ENCODE measurements at regions of chr22 and their contacts with region 1.

Region 1: GRCh38 chr22:21569459-21570170 is 2.1 kb downstream of the UBE2L3 start:
- DNase-seq: no peak
- ATAC-seq: no peak
- H3K4me3 ChIP-seq: peak overlapping the region in 7 of 12 donors; percentile 75 to 99 (median 94)
- H3K27ac ChIP-seq: peak overlapping the region in 2 of 12 donors; percentile 59 to 94
- H3K4me1 ChIP-seq: peaks cover 4 to 65% (median 57%) of the 10 kb centered on the region in 12 donors
- H3K27me3 ChIP-seq: no peaks in the 10 kb centered on the region
- CTCF ChIP-seq: no peak
- POLR2A ChIP-seq: no peak

Region 2: DNA sequence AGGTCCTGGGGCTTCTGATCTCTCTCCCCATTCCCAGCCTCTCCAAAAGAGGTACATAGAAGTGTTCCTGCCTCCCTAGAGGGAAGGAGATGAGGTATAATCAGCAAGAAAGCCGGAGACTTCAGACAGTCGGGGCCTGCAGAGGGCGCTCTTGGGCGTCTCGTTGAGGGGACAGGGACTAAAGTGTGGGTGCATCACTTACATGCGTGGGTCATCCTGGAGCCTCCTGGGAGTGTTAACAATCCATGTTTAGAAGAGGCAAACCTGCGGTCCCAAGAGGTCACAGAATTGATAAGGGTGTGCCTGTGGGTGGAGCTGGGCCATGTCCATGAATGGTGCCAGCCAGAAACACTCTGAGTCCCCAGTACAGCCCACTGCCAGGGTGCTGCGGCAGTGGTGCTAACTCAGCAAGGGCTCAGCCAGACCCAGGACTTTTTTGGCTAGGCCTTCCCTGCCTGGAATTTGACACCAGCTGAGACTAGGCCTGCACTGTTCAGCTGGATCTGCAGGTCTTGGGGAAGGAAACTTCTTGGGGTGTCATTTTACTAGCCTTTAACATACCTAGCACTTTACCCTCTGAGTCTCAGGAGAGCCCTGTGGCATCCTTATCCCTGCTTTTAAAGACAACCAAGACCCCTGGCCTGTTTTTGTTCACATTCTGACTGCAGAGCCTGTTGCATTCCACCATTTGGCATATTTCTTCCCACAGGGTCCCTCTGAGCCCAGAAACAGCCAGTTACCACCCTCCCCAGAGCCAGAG is 54.7 kb after region 1 on chr22:
- intact Hi-C with region 1: loop called in 2 of 10 experiments (anchors 5 kb)
- DNase-seq: peak in 2 of 5 donors; percentile 50 to 68
- ATAC-seq: peak; percentile 56 to 79 (median 59)
- H3K4me3 ChIP-seq: no peak overlapping the region
- H3K27ac ChIP-seq: peak overlapping the region in 6 of 12 donors; percentile 1 to 37 (median 22)
- H3K4me1 ChIP-seq: peaks cover 0 to 76% (median 32%) of the 10 kb centered on the region in 12 donors
- H3K27me3 ChIP-seq: no peaks in the 10 kb centered on the region
- CTCF ChIP-seq: peak in 8 of 12 donors; percentile 9 to 50 (median 26)
- POLR2A ChIP-seq: no peak

Region 3: DNA sequence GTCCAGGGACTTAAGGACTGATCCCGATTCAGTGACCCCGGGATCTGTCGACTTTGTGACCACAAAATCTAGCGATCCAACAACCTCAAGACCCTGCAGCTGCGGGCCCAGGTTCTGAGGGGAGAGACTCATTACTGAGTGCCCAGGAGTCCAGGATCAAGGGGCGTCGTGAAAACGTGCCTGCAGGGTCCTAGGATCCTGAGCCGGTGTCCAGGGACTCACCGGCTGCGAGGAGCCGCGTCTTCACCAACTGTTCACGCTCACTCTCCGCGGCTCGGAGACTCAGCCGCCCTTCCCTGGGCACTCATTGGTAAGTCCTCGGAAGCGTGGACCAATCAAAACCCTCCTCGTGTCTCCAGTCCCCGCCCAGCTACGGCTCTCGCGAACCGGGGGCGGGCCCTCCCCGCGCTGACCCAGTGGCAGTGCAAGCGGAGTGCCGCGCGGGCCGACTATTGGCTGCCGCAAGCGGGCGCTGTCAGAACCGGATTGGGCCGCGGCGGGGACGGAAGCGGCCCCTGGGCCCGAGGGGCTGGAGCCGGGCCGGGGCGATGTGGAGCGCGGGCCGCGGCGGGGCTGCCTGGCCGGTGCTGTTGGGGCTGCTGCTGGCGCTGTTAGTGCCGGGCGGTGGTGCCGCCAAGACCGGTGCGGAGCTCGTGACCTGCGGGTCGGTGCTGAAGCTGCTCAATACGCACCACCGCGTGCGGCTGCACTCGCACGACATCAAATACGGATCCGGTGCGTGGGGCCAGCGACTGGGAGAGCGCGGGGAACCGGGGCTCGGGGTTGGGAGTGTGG is 72.4 kb after region 1 on chr22 and contains the start of gene SDF2L1:
- intact Hi-C with region 1: no loop called
- DNase-seq: peak; percentile 99
- ATAC-seq: peak; percentile 99 to 100 (median 100)
- H3K4me3 ChIP-seq: peak within 1 kb of the TSS; percentile 44 to 87 (median 74)
- H3K27ac ChIP-seq: peak within 1 kb of the TSS in 11 of 12 donors; percentile 44 to 76 (median 67)
- H3K4me1 ChIP-seq: peaks cover 0 to 30% (median 14%) of the 10 kb centered on the region in 12 donors
- H3K27me3 ChIP-seq: no peaks in the 10 kb centered on the region
- CTCF ChIP-seq: peak in 10 of 12 donors; percentile 9 to 69 (median 21)
- POLR2A ChIP-seq: peak in 1 of 2 donors; percentile 86
- total RNA-seq, gene SDF2L1: 14.1 to 54.1 (median 24.5) TPM